ENCODE measurements at regions of chr1 and their contacts with region 1.

Region 1: DNA sequence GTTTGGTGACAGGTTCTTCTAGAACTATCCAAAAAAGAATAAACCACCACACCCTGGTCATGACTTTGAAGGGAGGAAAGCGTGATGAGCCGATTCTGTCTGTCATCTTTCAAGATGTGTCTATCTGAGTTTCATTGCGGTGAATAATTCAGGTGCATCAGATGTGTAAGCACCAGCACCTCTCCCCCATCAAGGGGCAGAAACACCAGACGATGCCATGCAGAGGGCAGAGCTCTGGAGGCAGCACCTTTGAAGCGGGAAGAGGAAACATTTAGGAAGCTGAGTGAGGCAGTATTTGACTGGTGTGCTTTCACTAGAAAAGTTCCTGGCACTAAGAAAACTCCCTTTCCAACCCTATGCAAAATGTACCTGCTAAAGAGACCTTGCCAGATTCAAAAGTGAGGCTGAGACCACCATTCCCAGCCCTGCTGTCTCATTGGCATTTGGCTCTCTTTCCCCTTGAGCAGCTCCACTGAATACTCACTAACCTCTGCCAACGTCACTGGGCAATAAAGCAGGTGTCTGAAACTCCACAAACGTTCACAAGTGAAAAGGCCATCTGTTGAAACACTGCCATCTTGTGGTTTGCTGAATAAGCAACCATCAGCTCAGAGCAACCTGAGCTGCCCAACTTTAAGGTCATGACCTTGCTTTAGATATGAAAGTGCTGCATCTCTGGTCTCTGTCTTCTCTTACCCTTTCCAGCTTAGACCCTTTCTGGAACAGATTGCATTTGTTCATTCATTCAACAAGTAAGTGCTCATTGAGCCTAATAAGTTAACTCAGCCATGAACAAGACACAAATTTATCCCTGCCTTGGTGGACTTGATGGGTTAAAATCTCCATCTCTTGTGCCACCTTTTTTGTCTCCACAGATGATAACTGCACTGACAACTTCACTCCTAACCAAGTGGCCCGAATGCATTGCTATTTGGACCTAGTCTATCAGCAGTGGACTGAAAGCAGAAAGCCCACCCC is 228.6 kb downstream of the PAPPA2 start:
- DNase-seq: peak in 3 of 9 donors; percentile 2 to 7 (median 3)
- ATAC-seq: no peak
- H3K4me3 ChIP-seq: no peak overlapping the region
- H3K4me3 Mint-ChIP-seq: no peak overlapping the region
- H3K27ac ChIP-seq: no peak overlapping the region
- H3K27ac Mint-ChIP-seq: no peak overlapping the region
- H3K4me1 ChIP-seq: no peaks in the 10 kb centered on the region
- H3K4me1 Mint-ChIP-seq: peaks cover 0 to 2% (median 0%) of the 10 kb centered on the region in 7 donors
- H3K27me3 ChIP-seq: no peaks in the 10 kb centered on the region
- H3K27me3 Mint-ChIP-seq: peaks cover 0 to 12% (median 1%) of the 10 kb centered on the region in 5 donors

Region 2: GRCh38 chr1:175373786-175374623 is 1317.5 kb before region 1 on chr1:
- CTCF ChIA-PET with region 1: no interaction called
- POLR2A ChIA-PET with region 1: no interaction called
- intact Hi-C with region 1: loop called in 1 of 2 experiments (anchors 5 kb)
- DNase-seq: peak in 1 of 9 donors; percentile 23
- ATAC-seq: no peak
- H3K4me3 ChIP-seq: no peak overlapping the region
- H3K4me3 Mint-ChIP-seq: no peak overlapping the region
- H3K27ac ChIP-seq: no peak overlapping the region
- H3K27ac Mint-ChIP-seq: peak overlapping the region in 1 of 9 donors; percentile 1
- H3K4me1 ChIP-seq: no peaks in the 10 kb centered on the region
- H3K4me1 Mint-ChIP-seq: no peaks in the 10 kb centered on the region
- H3K27me3 ChIP-seq: no peaks in the 10 kb centered on the region
- H3K27me3 Mint-ChIP-seq: peaks cover 0 to 14% (median 11%) of the 10 kb centered on the region in 5 donors

Region 3: GRCh38 chr1:176374967-176375569 is 316.5 kb before region 1 on chr1:
- CTCF ChIA-PET with region 1: no interaction called
- POLR2A ChIA-PET with region 1: interaction called, 3 read pairs
- intact Hi-C with region 1: loop called in 1 of 2 experiments (anchors 1 kb)
- DNase-seq: peak in 8 of 9 donors; percentile 10 to 59 (median 27)
- ATAC-seq: peak; percentile 67
- H3K4me3 ChIP-seq: no peak overlapping the region
- H3K4me3 Mint-ChIP-seq: no peak overlapping the region
- H3K27ac ChIP-seq: no peak overlapping the region
- H3K27ac Mint-ChIP-seq: no peak overlapping the region
- H3K4me1 ChIP-seq: no peaks in the 10 kb centered on the region
- H3K4me1 Mint-ChIP-seq: no peaks in the 10 kb centered on the region
- H3K27me3 ChIP-seq: no peaks in the 10 kb centered on the region
- H3K27me3 Mint-ChIP-seq: peaks cover 1 to 13% (median 6%) of the 10 kb centered on the region in 5 donors

Region 4: GRCh38 chr1:176559878-176560277 is 131.7 kb before region 1 on chr1:
- CTCF ChIA-PET with region 1: no interaction called
- POLR2A ChIA-PET with region 1: no interaction called
- intact Hi-C with region 1: loop called in 1 of 2 experiments (anchors 1 kb)
- DNase-seq: peak in 1 of 9 donors; percentile 21
- ATAC-seq: no peak
- H3K4me3 ChIP-seq: no peak overlapping the region
- H3K4me3 Mint-ChIP-seq: no peak overlapping the region
- H3K27ac ChIP-seq: no peak overlapping the region
- H3K27ac Mint-ChIP-seq: no peak overlapping the region
- H3K4me1 ChIP-seq: no peaks in the 10 kb centered on the region
- H3K4me1 Mint-ChIP-seq: no peaks in the 10 kb centered on the region
- H3K27me3 ChIP-seq: no peaks in the 10 kb centered on the region
- H3K27me3 Mint-ChIP-seq: peaks cover 0 to 22% (median 13%) of the 10 kb centered on the region in 5 donors

Measured in naive thymus-derived CD4-positive, alpha-beta T cell (primary cell).